B cell (primary cell): ENCODE measurements at regions of chr12 and their contacts with region 1.

Region 1: DNA sequence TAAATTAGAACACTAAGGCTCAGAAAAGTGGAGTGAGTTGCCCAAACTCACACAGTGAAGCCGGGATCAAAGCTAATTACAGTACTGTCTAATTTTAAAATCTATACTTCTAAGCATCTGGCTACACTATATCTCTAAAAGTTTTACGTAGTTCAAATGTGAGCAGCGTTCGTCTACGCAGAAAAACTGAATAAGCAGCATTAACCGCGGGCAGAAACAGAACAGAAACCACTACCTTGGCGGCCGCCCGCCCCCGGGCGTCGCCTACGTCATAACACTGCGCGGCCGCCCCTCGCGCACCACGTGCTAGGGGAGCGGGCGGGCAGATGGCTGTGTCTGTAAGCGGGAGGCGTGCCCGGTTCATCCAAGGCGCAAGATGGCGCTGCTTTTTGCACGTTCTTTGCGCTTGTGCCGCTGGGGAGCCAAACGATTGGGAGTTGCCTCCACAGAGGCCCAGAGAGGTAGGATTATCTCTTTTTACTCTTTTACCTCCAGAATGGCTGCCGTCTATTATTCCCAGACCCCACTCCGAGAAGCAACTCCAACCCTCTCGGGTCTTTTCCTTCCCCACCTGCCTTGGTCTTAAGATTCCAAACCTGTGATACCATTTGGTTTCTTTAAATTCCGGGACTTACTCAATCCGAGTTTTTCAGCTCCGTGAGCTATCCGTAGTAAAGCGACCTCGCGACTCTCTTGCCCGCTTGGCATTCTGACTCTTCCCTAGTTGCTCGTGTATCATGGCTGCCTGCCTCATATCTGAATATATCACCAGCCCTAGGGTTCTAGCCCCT is at the start of gene SPRYD4:
- DNase-seq: peak; percentile 97
- ATAC-seq: peak; percentile 93
- H3K4me3 ChIP-seq: peak within 1 kb of the TSS; percentile 91 to 100 (median 96)
- H3K4me3 Mint-ChIP-seq: peak within 1 kb of the TSS; percentile 93
- H3K27ac ChIP-seq: peak within 1 kb of the TSS; percentile 86 to 87
- H3K27ac Mint-ChIP-seq: peak within 1 kb of the TSS; percentile 98
- H3K4me1 ChIP-seq: peaks cover 12 to 28% of the 10 kb centered on the region in 2 donors
- H3K4me1 Mint-ChIP-seq: peaks cover 28% of the 10 kb centered on the region
- H3K27me3 ChIP-seq: no peaks in the 10 kb centered on the region
- H3K27me3 Mint-ChIP-seq: no peaks in the 10 kb centered on the region
- CTCF ChIP-seq: peak; percentile 30
- total RNA-seq, gene SPRYD4: 7.4 and 8.0 TPM in 2 replicates

Region 2: DNA sequence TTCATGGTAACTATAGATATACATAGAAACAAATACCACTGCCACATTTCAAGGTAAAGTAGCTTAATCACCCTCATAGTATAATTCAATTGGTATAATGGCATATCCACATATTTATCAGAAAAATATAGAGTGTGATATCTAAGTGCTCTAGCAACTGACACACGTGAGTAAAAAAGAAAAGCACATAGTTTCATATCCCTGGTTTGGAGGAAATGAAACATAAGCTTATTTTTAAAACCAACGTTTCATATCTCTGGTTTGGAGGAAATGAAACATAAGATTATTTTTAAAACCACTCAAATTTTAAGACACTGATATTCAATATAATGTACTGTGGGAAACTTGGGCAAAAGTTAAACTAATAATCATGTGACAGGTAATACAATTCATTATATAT is 1000.6 kb before region 1 on chr12:
- CTCF ChIA-PET with region 1: no interaction called
- POLR2A ChIA-PET with region 1: no interaction called
- intact Hi-C with region 1: no loop called
- DNase-seq: peak; percentile 44
- ATAC-seq: peak; percentile 36
- H3K4me3 ChIP-seq: peak overlapping the region in 1 of 5 experiments; percentile 36
- H3K4me3 Mint-ChIP-seq: peak overlapping the region; percentile 82
- H3K27ac ChIP-seq: peak overlapping the region in 1 of 2 donors; percentile 52
- H3K27ac Mint-ChIP-seq: peak overlapping the region; percentile 65
- H3K4me1 ChIP-seq: peaks cover 16 to 33% of the 10 kb centered on the region in 2 donors
- H3K4me1 Mint-ChIP-seq: peaks cover 36% of the 10 kb centered on the region
- H3K27me3 ChIP-seq: no peaks in the 10 kb centered on the region
- H3K27me3 Mint-ChIP-seq: no peaks in the 10 kb centered on the region
- CTCF ChIP-seq: no peak

Region 3: DNA sequence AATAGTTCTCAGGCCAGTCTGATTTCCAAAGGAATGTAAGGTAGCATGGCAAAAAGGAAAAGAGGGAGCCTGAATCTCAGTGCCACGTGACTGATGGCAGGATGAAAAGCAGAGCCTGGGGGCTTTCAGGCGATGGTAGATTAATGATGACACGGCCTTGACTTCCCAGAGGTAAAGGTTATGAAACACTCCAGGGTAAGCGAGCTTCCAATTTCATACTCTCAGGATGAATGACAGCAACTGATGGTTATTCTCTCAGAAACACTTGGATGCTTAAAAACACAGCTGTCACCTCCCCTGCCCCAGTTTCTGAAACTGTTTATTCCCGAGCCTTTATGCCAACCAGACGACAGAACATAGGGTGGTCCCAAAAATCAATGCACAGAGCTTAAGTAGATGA is 696.7 kb before region 1 on chr12:
- CTCF ChIA-PET with region 1: no interaction called
- POLR2A ChIA-PET with region 1: no interaction called
- intact Hi-C with region 1: no loop called
- DNase-seq: no peak
- ATAC-seq: no peak
- H3K4me3 ChIP-seq: no peak overlapping the region
- H3K4me3 Mint-ChIP-seq: no peak overlapping the region
- H3K27ac ChIP-seq: no peak overlapping the region
- H3K27ac Mint-ChIP-seq: no peak overlapping the region
- H3K4me1 ChIP-seq: no peaks in the 10 kb centered on the region
- H3K4me1 Mint-ChIP-seq: no peaks in the 10 kb centered on the region
- H3K27me3 ChIP-seq: no peaks in the 10 kb centered on the region
- H3K27me3 Mint-ChIP-seq: no peaks in the 10 kb centered on the region
- CTCF ChIP-seq: no peak

Region 4: GRCh38 chr12:56206457-56207166 is 261.8 kb before region 1 on chr12:
- CTCF ChIA-PET with region 1: interaction called, 5 read pairs
- POLR2A ChIA-PET with region 1: no interaction called
- intact Hi-C with region 1: loop called (anchors 5 kb)
- DNase-seq: peak; percentile 65
- ATAC-seq: no peak
- H3K4me3 ChIP-seq: no peak overlapping the region
- H3K4me3 Mint-ChIP-seq: no peak overlapping the region
- H3K27ac ChIP-seq: peak overlapping the region in 1 of 2 donors; percentile 65
- H3K27ac Mint-ChIP-seq: peak overlapping the region; percentile 89
- H3K4me1 ChIP-seq: peaks cover 9 to 18% of the 10 kb centered on the region in 2 donors
- H3K4me1 Mint-ChIP-seq: peaks cover 47% of the 10 kb centered on the region
- H3K27me3 ChIP-seq: no peaks in the 10 kb centered on the region
- H3K27me3 Mint-ChIP-seq: no peaks in the 10 kb centered on the region
- CTCF ChIP-seq: peak; percentile 63

Region 5: GRCh38 chr12:56266693-56267442 is 201.5 kb before region 1 on chr12 and contains the start of gene COQ10A:
- CTCF ChIA-PET with region 1: interaction called, 16 read pairs
- POLR2A ChIA-PET with region 1: interaction called, 5 read pairs
- intact Hi-C with region 1: loop called (anchors 1 kb)
- DNase-seq: peak; percentile 94
- ATAC-seq: peak; percentile 89
- H3K4me3 ChIP-seq: peak within 1 kb of the TSS; percentile 65 to 86 (median 75)
- H3K4me3 Mint-ChIP-seq: peak within 1 kb of the TSS; percentile 91
- H3K27ac ChIP-seq: peak within 1 kb of the TSS; percentile 94
- H3K27ac Mint-ChIP-seq: peak within 1 kb of the TSS; percentile 95
- H3K4me1 ChIP-seq: peaks cover 10 to 15% of the 10 kb centered on the region in 2 donors
- H3K4me1 Mint-ChIP-seq: peaks cover 20% of the 10 kb centered on the region
- H3K27me3 ChIP-seq: no peaks in the 10 kb centered on the region
- H3K27me3 Mint-ChIP-seq: no peaks in the 10 kb centered on the region
- CTCF ChIP-seq: peak; percentile 72
- total RNA-seq, gene COQ10A: 73.5 and 76.3 TPM in 2 replicates

Region 6: DNA sequence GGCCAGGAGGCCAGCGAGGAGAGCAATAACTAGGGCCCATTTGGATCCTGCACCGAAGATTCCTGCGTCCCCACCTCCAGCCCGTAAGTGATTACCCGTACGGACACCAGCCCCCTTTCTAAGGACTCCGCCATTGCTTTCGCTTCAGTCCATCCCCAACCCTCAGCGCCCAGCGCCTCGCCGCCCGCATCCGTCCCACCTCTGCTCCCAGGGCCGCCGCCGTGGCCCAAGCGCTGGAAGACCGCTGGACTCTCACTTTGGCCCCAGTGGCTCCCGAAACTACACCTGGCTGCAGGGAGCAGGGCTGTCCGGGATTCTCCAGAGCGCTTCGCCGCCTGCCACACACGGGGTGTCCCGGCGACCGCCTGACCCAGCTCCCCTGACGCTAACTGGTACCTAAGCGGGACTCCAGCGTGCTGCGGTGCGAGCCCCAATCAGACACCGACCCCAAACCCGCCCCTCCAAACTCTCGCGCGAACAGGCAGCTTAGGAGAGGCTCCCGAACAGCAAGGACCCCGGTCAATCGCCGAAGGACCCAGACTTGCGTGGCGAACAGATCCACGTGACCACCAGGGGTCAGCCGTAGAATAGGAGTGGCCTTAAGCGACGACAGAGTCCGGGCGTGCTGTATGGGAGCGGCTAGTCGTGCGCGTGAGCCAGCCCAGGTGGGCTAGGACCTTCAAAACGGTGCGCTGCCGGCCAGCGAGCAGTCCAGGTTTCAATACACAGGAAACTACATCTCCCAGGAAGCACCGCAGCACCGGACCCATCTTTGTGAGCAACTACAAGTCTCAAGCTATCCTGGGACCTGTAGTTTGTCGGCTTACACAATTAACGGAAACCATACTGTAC is 152.6 kb before region 1 on chr12 and contains the start of gene CNPY2:
- CTCF ChIA-PET with region 1: interaction called, 44 read pairs
- POLR2A ChIA-PET with region 1: interaction called, 4 read pairs
- intact Hi-C with region 1: loop called (anchors 1 kb)
- DNase-seq: peak; percentile 99
- ATAC-seq: peak; percentile 86
- H3K4me3 ChIP-seq: peak within 1 kb of the TSS; percentile 78 to 94 (median 91)
- H3K4me3 Mint-ChIP-seq: peak within 1 kb of the TSS; percentile 99
- H3K27ac ChIP-seq: peak within 1 kb of the TSS; percentile 67 to 90
- H3K27ac Mint-ChIP-seq: peak within 1 kb of the TSS; percentile 99
- H3K4me1 ChIP-seq: peaks cover 12 to 15% of the 10 kb centered on the region in 2 donors
- H3K4me1 Mint-ChIP-seq: peaks cover 10% of the 10 kb centered on the region
- H3K27me3 ChIP-seq: no peaks in the 10 kb centered on the region
- H3K27me3 Mint-ChIP-seq: no peaks in the 10 kb centered on the region
- CTCF ChIP-seq: no peak
- total RNA-seq, gene CNPY2: 89.0 and 91.2 TPM in 2 replicates

Region 7: GRCh38 chr12:56359851-56360767 is 108.3 kb before region 1 on chr12 and contains the start of gene STAT2:
- CTCF ChIA-PET with region 1: interaction called, 59 read pairs
- POLR2A ChIA-PET with region 1: interaction called, 4 read pairs
- intact Hi-C with region 1: loop called (anchors 1 kb)
- DNase-seq: peak; percentile 99
- ATAC-seq: peak; percentile 93
- H3K4me3 ChIP-seq: peak within 1 kb of the TSS; percentile 55 to 97 (median 76)
- H3K4me3 Mint-ChIP-seq: peak within 1 kb of the TSS; percentile 89
- H3K27ac ChIP-seq: peak within 1 kb of the TSS; percentile 37 to 72
- H3K27ac Mint-ChIP-seq: peak within 1 kb of the TSS; percentile 92
- H3K4me1 ChIP-seq: peaks cover 15 to 24% of the 10 kb centered on the region in 2 donors
- H3K4me1 Mint-ChIP-seq: peaks cover 29% of the 10 kb centered on the region
- H3K27me3 ChIP-seq: no peaks in the 10 kb centered on the region
- H3K27me3 Mint-ChIP-seq: no peaks in the 10 kb centered on the region
- CTCF ChIP-seq: no peak
- total RNA-seq, gene STAT2: 298 and 309 TPM in 2 replicates

Region 8: GRCh38 chr12:56510786-56511185 is 42.4 kb after region 1 on chr12:
- CTCF ChIA-PET with region 1: no interaction called
- POLR2A ChIA-PET with region 1: no interaction called
- intact Hi-C with region 1: no loop called
- DNase-seq: no peak
- ATAC-seq: no peak
- H3K4me3 ChIP-seq: no peak overlapping the region
- H3K4me3 Mint-ChIP-seq: no peak overlapping the region
- H3K27ac ChIP-seq: no peak overlapping the region
- H3K27ac Mint-ChIP-seq: no peak overlapping the region
- H3K4me1 ChIP-seq: peaks cover 0 to 2% of the 10 kb centered on the region in 2 donors
- H3K4me1 Mint-ChIP-seq: peaks cover 2% of the 10 kb centered on the region
- H3K27me3 ChIP-seq: no peaks in the 10 kb centered on the region
- H3K27me3 Mint-ChIP-seq: peaks cover 13% of the 10 kb centered on the region
- CTCF ChIP-seq: no peak

Region 9: DNA sequence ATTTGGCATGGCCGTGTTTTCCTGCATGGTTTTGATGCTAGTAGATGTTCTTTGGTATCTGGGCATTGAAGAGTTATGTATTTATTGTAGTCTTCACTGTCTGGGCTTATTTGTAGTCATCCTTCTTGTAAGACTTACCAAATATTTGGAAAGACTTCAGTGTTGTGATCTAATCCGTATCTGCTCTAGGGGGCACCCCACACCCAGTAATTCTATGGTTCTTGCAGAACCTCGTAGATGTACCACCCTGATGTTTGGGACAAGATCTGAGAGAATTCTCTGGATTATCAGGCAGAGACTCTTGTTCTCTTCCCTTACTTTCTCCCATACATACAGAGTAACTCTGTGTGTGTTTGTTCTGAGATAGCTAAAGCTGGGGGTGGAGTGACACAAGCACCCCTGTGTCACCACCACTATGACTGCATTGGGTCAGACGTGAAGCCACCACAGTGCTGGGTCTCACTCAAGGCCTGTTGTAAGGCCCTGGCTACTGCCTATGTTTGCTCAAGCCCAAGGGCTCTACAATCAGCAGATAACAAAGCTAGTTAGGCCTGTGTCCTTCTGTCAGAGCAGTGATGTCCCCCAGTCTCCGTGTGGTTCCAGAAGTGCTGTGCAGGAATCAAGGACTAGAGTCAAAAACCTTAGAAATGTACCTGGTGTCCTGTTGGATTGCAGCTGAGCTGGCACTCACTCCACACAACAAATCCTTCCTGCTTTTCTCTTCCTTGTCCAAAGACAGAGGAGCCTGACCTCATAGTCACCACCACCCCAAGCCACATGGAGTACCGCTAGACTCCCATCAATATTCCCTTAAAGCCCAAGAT is 479.4 kb after region 1 on chr12:
- CTCF ChIA-PET with region 1: no interaction called
- POLR2A ChIA-PET with region 1: no interaction called
- intact Hi-C with region 1: no loop called
- DNase-seq: no peak
- ATAC-seq: no peak
- H3K4me3 ChIP-seq: no peak overlapping the region
- H3K4me3 Mint-ChIP-seq: no peak overlapping the region
- H3K27ac ChIP-seq: no peak overlapping the region
- H3K27ac Mint-ChIP-seq: no peak overlapping the region
- H3K4me1 ChIP-seq: no peaks in the 10 kb centered on the region
- H3K4me1 Mint-ChIP-seq: no peaks in the 10 kb centered on the region
- H3K27me3 ChIP-seq: peaks cover 0 to 3% (median 0%) of the 10 kb centered on the region in 4 experiments
- H3K27me3 Mint-ChIP-seq: peaks cover 26% of the 10 kb centered on the region
- CTCF ChIP-seq: no peak